ENCODE measurements at regions of chr22 and their contacts with region 1.

Region 1: GRCh38 chr22:33519071-33519973 is 401.0 kb downstream of the LARGE1 start:
- DNase-seq: peak in 2 of 4 donors; percentile 68 to 77
- ATAC-seq: peak; percentile 84
- H3K4me3 ChIP-seq: no peak overlapping the region
- H3K27ac ChIP-seq: no peak overlapping the region
- H3K4me1 ChIP-seq: no peaks in the 10 kb centered on the region
- H3K27me3 ChIP-seq: no peaks in the 10 kb centered on the region
- CTCF ChIP-seq: peak; percentile 38 to 47

Region 2: DNA sequence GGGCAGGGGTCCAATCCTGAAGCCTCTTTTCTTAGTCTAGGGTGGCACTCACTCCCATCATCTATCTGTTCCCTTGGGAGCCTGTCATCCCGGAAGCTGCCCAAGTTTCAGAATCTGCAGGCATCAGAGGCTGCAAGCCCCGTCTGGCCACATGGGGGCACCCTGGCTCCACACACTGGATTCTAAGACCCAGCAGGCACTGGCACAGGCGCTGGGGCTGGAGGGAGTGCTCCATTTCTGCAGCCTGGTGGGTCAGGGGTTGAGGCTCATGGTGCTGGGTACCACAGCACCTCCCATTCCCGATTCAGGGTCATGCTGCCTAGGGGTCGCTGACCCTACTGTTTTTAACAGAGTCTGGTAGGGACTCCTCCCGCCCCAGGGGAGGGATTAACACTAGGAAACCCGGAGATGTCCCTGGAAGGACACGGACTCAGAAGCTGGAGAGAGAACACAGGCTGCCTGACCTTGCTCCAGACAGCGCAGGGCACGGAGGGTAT is 217.2 kb before region 1 on chr22:
- intact Hi-C with region 1: loop called in 1 of 2 experiments (anchors 10 kb)
- DNase-seq: peak; percentile 57 to 88 (median 76)
- ATAC-seq: peak; percentile 97
- H3K4me3 ChIP-seq: no peak overlapping the region
- H3K27ac ChIP-seq: no peak overlapping the region
- H3K4me1 ChIP-seq: no peaks in the 10 kb centered on the region
- H3K27me3 ChIP-seq: no peaks in the 10 kb centered on the region
- CTCF ChIP-seq: peak; percentile 80 to 89

Region 3: DNA sequence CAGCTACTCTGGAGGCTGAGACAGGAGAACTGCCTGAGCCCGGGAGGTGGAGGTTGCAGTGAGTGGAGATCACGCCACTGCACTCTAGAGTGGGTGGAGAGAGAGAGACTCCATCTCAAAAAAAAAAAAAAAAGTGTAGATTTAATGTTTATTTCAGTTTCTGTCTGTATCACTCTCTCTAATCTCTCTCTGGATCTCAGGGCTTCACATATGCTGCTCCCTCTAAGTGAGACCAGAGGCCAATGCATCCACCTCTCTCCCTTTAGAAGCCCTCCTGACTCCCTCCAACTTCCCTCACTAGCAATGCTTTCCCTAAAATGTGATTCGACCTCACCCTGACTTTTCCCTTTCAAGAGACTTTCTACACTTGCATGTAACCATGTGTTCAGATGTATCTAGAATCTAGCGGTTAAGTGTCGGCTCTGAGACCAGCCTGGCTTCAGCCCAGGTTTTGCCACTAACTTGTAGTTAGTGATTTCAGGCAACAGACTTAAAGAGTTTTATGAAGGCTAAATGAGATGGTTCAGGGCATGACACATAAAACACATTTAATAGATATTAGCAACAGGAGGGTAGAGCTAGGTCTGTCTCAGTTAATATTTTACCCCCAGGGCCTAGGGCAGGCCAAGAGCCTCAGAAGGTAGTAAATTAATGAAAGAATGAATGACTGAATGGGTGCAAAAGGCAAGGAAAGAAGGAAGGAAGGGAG is 36.6 kb after region 1 on chr22:
- intact Hi-C with region 1: no loop called
- DNase-seq: no peak
- ATAC-seq: no peak
- H3K4me3 ChIP-seq: no peak overlapping the region
- H3K27ac ChIP-seq: no peak overlapping the region
- H3K4me1 ChIP-seq: no peaks in the 10 kb centered on the region
- H3K27me3 ChIP-seq: no peaks in the 10 kb centered on the region
- CTCF ChIP-seq: no peak

Region 4: DNA sequence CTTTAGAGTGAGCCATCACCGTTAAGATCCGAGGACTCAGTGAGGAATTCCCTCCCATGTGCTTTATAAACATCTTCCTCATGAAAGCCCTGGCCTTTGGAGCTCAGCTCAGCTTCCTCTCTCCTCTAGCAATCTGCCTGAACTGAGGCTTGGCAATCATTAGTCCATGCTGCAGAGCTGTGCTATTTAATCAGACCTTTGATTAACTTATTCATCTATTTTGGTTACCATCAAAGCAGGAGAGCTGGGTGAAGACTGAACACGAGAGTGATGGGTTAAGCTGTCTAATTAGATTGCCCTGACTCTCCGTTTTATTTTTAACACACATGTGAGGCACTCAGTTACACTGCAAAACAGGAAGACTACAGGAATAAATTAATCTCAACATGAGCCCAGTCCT is 49.7 kb after region 1 on chr22:
- intact Hi-C with region 1: no loop called
- DNase-seq: no peak
- ATAC-seq: no peak
- H3K4me3 ChIP-seq: no peak overlapping the region
- H3K27ac ChIP-seq: no peak overlapping the region
- H3K4me1 ChIP-seq: no peaks in the 10 kb centered on the region
- H3K27me3 ChIP-seq: no peaks in the 10 kb centered on the region
- CTCF ChIP-seq: no peak

Region 5: DNA sequence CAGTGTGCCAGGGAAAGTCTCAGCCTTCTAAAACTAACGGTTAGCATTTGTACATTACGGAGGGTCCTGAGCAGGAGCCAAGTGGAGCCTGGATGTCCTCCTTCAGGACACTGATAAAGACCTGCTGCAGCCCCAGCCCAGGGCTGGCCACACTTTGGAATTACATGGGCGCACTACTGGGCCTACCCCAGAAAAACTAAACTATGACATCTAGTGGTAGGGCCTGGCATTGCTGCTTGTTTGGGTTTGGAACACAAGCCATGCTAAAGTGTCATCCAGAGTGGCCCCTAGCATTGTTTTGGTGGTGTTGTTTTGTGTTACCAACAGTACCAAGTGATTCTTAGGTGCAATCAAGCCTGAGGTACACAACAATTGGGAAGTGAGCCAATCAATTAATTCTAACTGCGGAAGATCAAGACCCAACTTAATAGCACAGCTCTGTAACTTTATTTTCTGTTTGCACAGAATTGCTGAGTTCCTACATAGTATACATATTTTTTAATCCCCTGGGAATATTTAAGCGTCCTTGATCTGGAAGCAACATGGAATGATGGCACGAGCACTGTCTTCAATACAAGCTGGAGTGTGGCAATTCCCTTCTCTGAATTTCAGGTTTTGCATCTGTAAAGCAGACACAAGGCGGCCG is 60.2 kb after region 1 on chr22:
- intact Hi-C with region 1: loop called in 1 of 2 experiments (anchors 5 kb)
- DNase-seq: peak in 1 of 4 donors; percentile 51
- ATAC-seq: peak; percentile 97
- H3K4me3 ChIP-seq: no peak overlapping the region
- H3K27ac ChIP-seq: no peak overlapping the region
- H3K4me1 ChIP-seq: peaks cover 0 to 7% of the 10 kb centered on the region in 2 donors
- H3K27me3 ChIP-seq: no peaks in the 10 kb centered on the region
- CTCF ChIP-seq: peak; percentile 79 to 85

Region 6: DNA sequence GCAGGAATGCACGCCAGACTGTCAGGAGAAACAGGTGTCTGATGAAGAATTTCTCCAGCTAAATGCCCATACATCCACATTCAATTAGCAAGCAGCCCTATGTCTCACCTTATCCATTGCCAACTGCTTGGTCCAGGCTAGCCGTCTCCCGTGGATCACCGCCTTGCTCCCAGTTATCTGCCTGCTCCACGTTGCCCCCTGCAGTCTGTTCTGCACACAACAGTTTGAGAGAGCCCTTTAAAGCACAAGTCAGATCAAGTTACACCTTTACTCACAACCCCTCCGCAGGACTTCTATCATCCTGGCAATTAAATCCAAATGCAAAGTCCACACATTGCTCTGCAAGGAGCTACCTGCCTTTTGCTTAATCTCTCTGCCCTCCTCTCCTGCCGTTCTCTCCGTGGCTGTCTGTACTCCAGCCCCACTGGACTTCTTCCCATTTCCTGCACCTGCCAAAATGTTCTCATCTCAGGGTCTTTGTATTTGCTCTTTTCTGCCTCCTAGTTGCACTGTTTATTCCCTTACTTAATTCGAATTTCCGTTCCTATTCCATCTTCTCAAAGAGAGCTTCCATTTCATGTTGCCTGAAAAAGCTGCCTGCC is 586.2 kb after region 1 on chr22:
- intact Hi-C with region 1: loop called in 1 of 2 experiments (anchors 10 kb)
- DNase-seq: peak in 2 of 4 donors; percentile 35 to 43
- ATAC-seq: peak; percentile 95
- H3K4me3 ChIP-seq: no peak overlapping the region
- H3K27ac ChIP-seq: no peak overlapping the region
- H3K4me1 ChIP-seq: no peaks in the 10 kb centered on the region
- H3K27me3 ChIP-seq: peaks cover 0 to 19% of the 10 kb centered on the region in 2 donors
- CTCF ChIP-seq: peak; percentile 51